Activated CD4-positive, alpha-beta memory T cell treated with anti-CD3 and anti-CD28 coated beads, Interleukin-2, amount 10 ng/mL, durations not matched to agents 7 days and 5 days (primary cell): ENCODE measurements at regions of chr19 and their contacts with region 1.

Region 1: GRCh38 chr19:1064661-1065605 is 2.0 kb upstream of the ARHGAP45 start:
- DNase-seq: peak; percentile 81
- H3K4me3 Mint-ChIP-seq: peak overlapping the region; percentile 47
- H3K27ac Mint-ChIP-seq: peak overlapping the region; percentile 51
- H3K4me1 Mint-ChIP-seq: peaks cover 42% of the 10 kb centered on the region
- H3K27me3 Mint-ChIP-seq: no peaks in the 10 kb centered on the region

Region 2: GRCh38 chr19:1020868-1021425 is 44.0 kb before region 1 on chr19 and contains the start of gene TMEM259:
- CTCF ChIA-PET with region 1: interaction called, 3 read pairs
- POLR2A ChIA-PET with region 1: interaction called, 70 read pairs
- DNase-seq: peak; percentile 98
- H3K4me3 Mint-ChIP-seq: peak within 1 kb of the TSS; percentile 91
- H3K27ac Mint-ChIP-seq: peak within 1 kb of the TSS; percentile 92
- H3K4me1 Mint-ChIP-seq: peaks cover 47% of the 10 kb centered on the region
- H3K27me3 Mint-ChIP-seq: no peaks in the 10 kb centered on the region
- total RNA-seq, gene TMEM259: 181 TPM

Region 3: DNA sequence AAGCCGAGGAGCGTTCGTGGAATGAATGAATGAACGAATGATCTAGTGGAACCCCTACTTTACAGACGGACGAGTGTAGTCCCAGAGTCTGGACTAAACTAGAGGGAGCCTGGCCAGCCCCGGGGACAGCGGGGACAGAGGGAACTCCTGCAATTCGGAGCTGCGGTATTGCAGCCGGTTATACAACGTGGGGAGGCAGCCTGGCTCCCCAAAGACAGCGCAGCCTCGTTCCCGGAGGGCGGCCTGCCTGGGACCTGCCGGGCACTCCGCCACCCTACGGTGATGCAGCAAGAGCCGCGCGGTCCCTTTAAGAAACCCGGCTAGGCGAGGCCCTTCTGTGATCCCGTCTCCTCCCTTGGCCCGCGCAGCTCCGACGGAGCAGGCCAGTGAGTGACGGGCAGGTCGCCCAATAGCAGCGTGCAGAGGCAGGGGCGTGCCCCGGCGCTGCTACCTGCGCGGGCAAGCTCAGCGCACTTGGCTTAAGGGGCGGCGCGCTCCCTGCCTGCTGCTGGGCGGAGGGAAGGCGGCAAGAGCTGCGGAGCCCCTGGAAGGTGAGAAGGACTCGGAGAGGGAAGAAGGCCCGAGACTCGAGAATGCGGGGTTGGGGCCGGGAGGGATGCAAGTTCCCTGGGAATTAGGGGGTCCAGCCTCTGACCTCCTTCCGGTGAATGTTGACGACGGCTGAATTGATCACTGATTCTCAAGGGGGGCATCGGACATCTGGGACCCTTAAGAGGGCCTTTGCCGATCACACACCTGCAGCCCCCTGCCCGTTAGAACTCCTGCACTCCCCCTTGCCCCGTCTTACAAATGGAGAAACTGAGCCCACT is 25.1 kb before region 1 on chr19 and contains the start of gene ABCA7:
- CTCF ChIA-PET with region 1: interaction called, 4 read pairs
- POLR2A ChIA-PET with region 1: interaction called, 40 read pairs
- DNase-seq: peak; percentile 99
- H3K4me3 Mint-ChIP-seq: peak within 1 kb of the TSS; percentile 97
- H3K27ac Mint-ChIP-seq: peak within 1 kb of the TSS; percentile 90
- H3K4me1 Mint-ChIP-seq: peaks cover 65% of the 10 kb centered on the region
- H3K27me3 Mint-ChIP-seq: no peaks in the 10 kb centered on the region
- total RNA-seq, gene ABCA7: 92.7 to 95.1 TPM

Region 4: GRCh38 chr19:1082172-1082927 is 17.4 kb after region 1 on chr19:
- CTCF ChIA-PET with region 1: interaction called, 56 read pairs
- POLR2A ChIA-PET with region 1: interaction called, 334 read pairs
- DNase-seq: peak; percentile 92
- H3K4me3 Mint-ChIP-seq: no peak overlapping the region
- H3K27ac Mint-ChIP-seq: peak overlapping the region; percentile 72
- H3K4me1 Mint-ChIP-seq: peaks cover 63% of the 10 kb centered on the region
- H3K27me3 Mint-ChIP-seq: no peaks in the 10 kb centered on the region

Region 5: DNA sequence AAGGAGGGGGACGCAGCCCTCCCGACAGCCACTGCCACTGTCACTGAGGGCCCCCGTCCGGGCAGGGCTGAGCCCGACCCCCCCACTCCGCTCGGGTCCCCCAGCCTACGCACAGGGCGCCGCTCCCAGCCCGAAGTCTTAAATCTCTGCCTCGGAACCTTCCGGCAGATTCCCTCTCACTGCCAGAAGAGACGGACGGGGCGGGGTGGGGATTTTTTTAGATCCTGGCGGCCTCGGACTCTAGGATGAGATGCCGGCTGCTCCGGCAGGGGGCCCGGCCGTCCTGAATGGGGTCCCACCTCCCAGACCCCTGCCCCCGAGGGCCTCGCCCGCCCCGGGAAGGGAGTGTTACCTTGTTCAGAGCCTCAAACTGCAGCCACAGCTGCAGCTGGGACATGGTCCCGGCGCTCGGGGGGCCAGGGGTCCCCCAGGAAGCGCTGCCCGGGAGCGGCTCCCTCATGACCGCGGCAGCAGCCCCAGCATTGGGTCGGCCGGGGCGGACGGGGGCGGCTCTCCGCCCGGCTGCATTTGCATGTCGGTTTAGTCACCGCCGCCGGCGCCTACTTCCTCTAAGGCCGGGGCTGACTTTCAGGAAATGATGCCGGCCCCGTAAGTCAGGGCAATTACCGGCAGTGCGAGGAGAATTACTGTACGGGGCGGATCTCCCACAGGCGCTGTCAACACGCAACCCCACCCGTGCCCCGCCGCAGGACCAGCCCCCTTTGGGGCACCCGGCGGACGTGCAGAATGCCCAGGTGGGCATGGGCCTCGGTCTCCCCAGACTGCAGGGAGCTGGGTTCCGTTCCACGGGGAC is 67.0 kb after region 1 on chr19:
- CTCF ChIA-PET with region 1: no interaction called
- POLR2A ChIA-PET with region 1: interaction called, 20 read pairs
- DNase-seq: peak; percentile 92
- H3K4me3 Mint-ChIP-seq: peak overlapping the region; percentile 86
- H3K27ac Mint-ChIP-seq: peak overlapping the region; percentile 92
- H3K4me1 Mint-ChIP-seq: peaks cover 44% of the 10 kb centered on the region
- H3K27me3 Mint-ChIP-seq: no peaks in the 10 kb centered on the region